Caco-2 (cell line): ENCODE measurements at regions of chr12 and their contacts with region 1.

Region 1: DNA sequence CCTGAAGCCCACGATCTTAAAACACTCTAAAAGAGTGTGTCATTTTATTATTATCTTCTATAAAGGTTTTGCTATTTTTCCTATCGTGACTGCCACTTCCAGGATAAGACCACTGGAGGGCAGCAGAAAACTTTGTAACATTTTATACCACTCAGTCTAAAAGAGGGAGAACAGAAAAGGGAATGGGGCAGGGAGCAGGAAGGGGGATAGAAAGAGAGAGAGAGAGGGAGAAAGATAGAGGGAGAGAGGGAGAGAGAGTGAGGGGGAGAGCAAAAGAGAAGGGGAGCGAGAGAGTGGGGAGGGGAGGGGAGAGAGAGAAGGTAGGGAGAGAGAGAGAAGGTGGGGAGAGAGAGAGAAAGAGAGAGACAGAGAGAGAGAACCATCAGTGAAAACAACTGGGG is 2.0 kb upstream of the ART4 start:
- DNase-seq: peak; percentile 53 to 70
- H3K4me3 ChIP-seq: no peak overlapping the region
- H3K4me3 Mint-ChIP-seq: no peak overlapping the region
- H3K27ac Mint-ChIP-seq: no peak overlapping the region
- H3K4me1 ChIP-seq: peaks cover 32% of the 10 kb centered on the region
- H3K4me1 Mint-ChIP-seq: peaks cover 19% of the 10 kb centered on the region
- H3K27me3 ChIP-seq: no peaks in the 10 kb centered on the region
- H3K27me3 Mint-ChIP-seq: peaks cover 2% of the 10 kb centered on the region
- CTCF ChIP-seq: peak; percentile 80 to 89

Region 2: DNA sequence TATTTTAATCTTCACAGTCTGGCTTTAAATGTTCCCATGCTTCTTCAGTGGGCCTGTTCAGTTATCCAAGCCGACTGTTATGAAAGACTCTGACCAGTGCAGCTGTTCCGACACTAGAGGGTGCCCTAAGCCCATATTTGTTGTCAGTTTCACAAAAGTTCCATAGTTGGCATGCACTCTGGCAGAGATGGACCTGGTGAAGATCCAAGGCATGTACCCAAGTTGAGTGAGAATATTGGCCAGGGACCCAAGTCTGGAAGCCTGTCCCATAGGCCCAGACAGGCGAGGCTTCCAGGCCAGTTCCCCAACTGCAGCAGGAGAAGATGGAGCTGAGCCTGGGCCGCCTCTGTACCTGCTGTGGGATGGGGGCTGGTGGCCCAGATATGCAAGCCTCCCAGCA is 121.6 kb before region 1 on chr12:
- CTCF ChIA-PET with region 1: no interaction called
- POLR2A ChIA-PET with region 1: no interaction called
- intact Hi-C with region 1: loop called (anchors 1 kb)
- DNase-seq: peak; percentile 47 to 66
- H3K4me3 ChIP-seq: no peak overlapping the region
- H3K4me3 Mint-ChIP-seq: no peak overlapping the region
- H3K27ac Mint-ChIP-seq: no peak overlapping the region
- H3K4me1 ChIP-seq: no peaks in the 10 kb centered on the region
- H3K4me1 Mint-ChIP-seq: no peaks in the 10 kb centered on the region
- H3K27me3 ChIP-seq: no peaks in the 10 kb centered on the region
- H3K27me3 Mint-ChIP-seq: no peaks in the 10 kb centered on the region
- CTCF ChIP-seq: peak; percentile 59 to 65

Region 3: GRCh38 chr12:14803011-14803829 is 42.1 kb before region 1 on chr12 and contains the starts of genes C12orf60 and WBP11:
- CTCF ChIA-PET with region 1: no interaction called
- POLR2A ChIA-PET with region 1: no interaction called
- intact Hi-C with region 1: loop called (anchors 5 kb)
- DNase-seq: peak; percentile 96 to 99
- H3K4me3 ChIP-seq: peak within 1 kb of the TSS; percentile 86
- H3K4me3 Mint-ChIP-seq: no peak within 1 kb of the TSS
- H3K27ac Mint-ChIP-seq: no peak within 1 kb of the TSS
- H3K4me1 ChIP-seq: peaks cover 12% of the 10 kb centered on the region; the same call in 1 of the 2 replicates
- H3K4me1 Mint-ChIP-seq: peaks cover 16% of the 10 kb centered on the region
- H3K27me3 ChIP-seq: no peaks in the 10 kb centered on the region
- H3K27me3 Mint-ChIP-seq: no peaks in the 10 kb centered on the region
- CTCF ChIP-seq: no peak
- total RNA-seq, gene C12orf60: 1.8 and 2.8 TPM in 2 replicates
- total RNA-seq, gene WBP11: 159 and 184 TPM in 2 replicates

Region 4: GRCh38 chr12:14828896-14829295 is 16.5 kb before region 1 on chr12:
- CTCF ChIA-PET with region 1: no interaction called
- POLR2A ChIA-PET with region 1: no interaction called
- intact Hi-C with region 1: no loop called
- DNase-seq: no peak
- H3K4me3 ChIP-seq: no peak overlapping the region
- H3K4me3 Mint-ChIP-seq: no peak overlapping the region
- H3K27ac Mint-ChIP-seq: no peak overlapping the region
- H3K4me1 ChIP-seq: no peaks in the 10 kb centered on the region
- H3K4me1 Mint-ChIP-seq: no peaks in the 10 kb centered on the region
- H3K27me3 ChIP-seq: no peaks in the 10 kb centered on the region
- H3K27me3 Mint-ChIP-seq: peaks cover 5% of the 10 kb centered on the region
- CTCF ChIP-seq: no peak

Region 5: GRCh38 chr12:14873440-14874185 is 28.3 kb after region 1 on chr12:
- CTCF ChIA-PET with region 1: no interaction called
- POLR2A ChIA-PET with region 1: no interaction called
- intact Hi-C with region 1: no loop called
- DNase-seq: no peak
- H3K4me3 ChIP-seq: no peak overlapping the region
- H3K4me3 Mint-ChIP-seq: no peak overlapping the region
- H3K27ac Mint-ChIP-seq: no peak overlapping the region
- H3K4me1 ChIP-seq: no peaks in the 10 kb centered on the region
- H3K4me1 Mint-ChIP-seq: peaks cover 8% of the 10 kb centered on the region
- H3K27me3 ChIP-seq: no peaks in the 10 kb centered on the region
- H3K27me3 Mint-ChIP-seq: no peaks in the 10 kb centered on the region
- CTCF ChIP-seq: no peak

Region 6: GRCh38 chr12:14892726-14893505 is 47.6 kb after region 1 on chr12:
- CTCF ChIA-PET with region 1: no interaction called
- POLR2A ChIA-PET with region 1: no interaction called
- intact Hi-C with region 1: loop called (anchors 1 kb)
- DNase-seq: peak in 1 of 2 experiments; percentile 18
- H3K4me3 ChIP-seq: no peak overlapping the region
- H3K4me3 Mint-ChIP-seq: no peak overlapping the region
- H3K27ac Mint-ChIP-seq: no peak overlapping the region
- H3K4me1 ChIP-seq: no peaks in the 10 kb centered on the region
- H3K4me1 Mint-ChIP-seq: no peaks in the 10 kb centered on the region
- H3K27me3 ChIP-seq: no peaks in the 10 kb centered on the region
- H3K27me3 Mint-ChIP-seq: peaks cover 7% of the 10 kb centered on the region
- CTCF ChIP-seq: peak in 1 of 2 experiments; percentile 19

Region 7: GRCh38 chr12:14995583-14996425 is 150.5 kb after region 1 on chr12:
- CTCF ChIA-PET with region 1: interaction called, 6 read pairs
- POLR2A ChIA-PET with region 1: no interaction called
- intact Hi-C with region 1: loop called (anchors 1 kb)
- DNase-seq: peak in 1 of 2 experiments; percentile 46
- H3K4me3 ChIP-seq: no peak overlapping the region
- H3K4me3 Mint-ChIP-seq: no peak overlapping the region
- H3K27ac Mint-ChIP-seq: no peak overlapping the region
- H3K4me1 ChIP-seq: 0 out of 2 replicates have a peak, but pooled peaks cover 4% of the 10 kb centered on the region
- H3K4me1 Mint-ChIP-seq: peaks cover 7% of the 10 kb centered on the region
- H3K27me3 ChIP-seq: no peaks in the 10 kb centered on the region
- H3K27me3 Mint-ChIP-seq: peaks cover 14% of the 10 kb centered on the region
- CTCF ChIP-seq: peak; percentile 69 to 74

Region 8: DNA sequence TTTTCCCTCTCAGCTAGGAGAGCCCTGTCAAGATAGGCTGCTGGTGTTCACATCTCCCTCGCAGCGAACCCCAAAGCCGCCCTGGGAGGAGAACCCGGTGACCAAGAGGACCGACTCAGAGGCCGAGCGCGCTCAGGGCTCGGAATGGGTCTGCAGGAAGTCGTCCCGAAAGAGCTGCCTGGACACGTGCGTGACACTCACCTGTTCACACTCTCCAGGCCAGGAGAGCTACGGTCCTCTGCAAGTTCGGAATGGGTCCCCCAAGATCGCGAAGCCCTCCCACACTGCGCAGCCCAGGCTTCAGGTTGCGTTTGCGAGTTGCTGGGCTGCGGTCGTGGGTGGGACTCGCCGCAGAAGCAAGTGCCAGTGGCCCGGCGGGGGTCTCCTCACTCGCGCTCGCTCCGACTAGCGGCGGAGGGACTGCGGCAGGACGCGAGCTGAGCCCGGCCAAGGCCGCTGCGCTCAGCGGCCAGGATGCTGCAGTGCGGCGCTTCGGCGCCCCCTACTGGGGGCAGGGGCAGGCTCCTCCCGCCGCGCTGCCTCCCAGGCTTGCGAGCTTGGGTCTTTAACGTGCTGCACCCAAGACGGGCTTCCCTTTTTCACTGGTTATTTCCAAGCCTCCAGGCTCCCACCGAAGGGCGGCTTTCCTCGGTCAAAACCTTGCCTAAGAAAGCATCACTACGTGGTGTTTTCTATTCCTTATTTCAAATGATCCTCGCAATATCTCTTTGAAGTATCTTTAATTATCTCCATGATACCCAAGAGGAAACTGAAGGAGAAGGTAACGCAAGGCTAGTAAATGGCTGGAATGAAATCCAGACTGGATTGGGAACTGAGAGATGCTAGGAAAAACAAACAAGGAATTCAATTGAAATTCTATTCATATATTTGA is 375.9 kb after region 1 on chr12 and contains the start of gene RERG:
- CTCF ChIA-PET with region 1: no interaction called
- POLR2A ChIA-PET with region 1: no interaction called
- intact Hi-C with region 1: loop called (anchors 5 kb)
- DNase-seq: peak in 1 of 2 experiments; percentile 74
- H3K4me3 ChIP-seq: peak within 1 kb of the TSS; percentile 24
- H3K4me3 Mint-ChIP-seq: no peak within 1 kb of the TSS
- H3K27ac Mint-ChIP-seq: no peak within 1 kb of the TSS
- H3K4me1 ChIP-seq: no peaks in the 10 kb centered on the region
- H3K4me1 Mint-ChIP-seq: no peaks in the 10 kb centered on the region
- H3K27me3 ChIP-seq: no peaks in the 10 kb centered on the region
- H3K27me3 Mint-ChIP-seq: peaks cover 6% of the 10 kb centered on the region
- CTCF ChIP-seq: peak; percentile 68 to 80
- total RNA-seq, gene RERG: 0.37 TPM in 1 of 2 replicates, not detected in the other